GM12878 (cell line): ENCODE measurements at regions of chr4 and their contacts with region 1.

Region 1: GRCh38 chr4:105666693-105667092 is 41.8 kb downstream of the INTS12 start:
- DNase-seq: no peak
- ATAC-seq: peak; percentile 85
- H3K4me3 ChIP-seq: no peak overlapping the region
- H3K27ac ChIP-seq: no peak overlapping the region
- H3K4me1 ChIP-seq: no peaks in the 10 kb centered on the region
- H3K27me3 ChIP-seq: no peaks in the 10 kb centered on the region
- CTCF ChIP-seq: peak; percentile 28 to 44 (median 34); a peak in 4 of 6 replicates
- EP300 ChIP-seq: no peak
- POLR2A ChIP-seq: no peak
- RAD21 ChIP-seq: peak; percentile 72

Region 2: GRCh38 chr4:105496899-105497298 is 169.8 kb before region 1 on chr4:
- CTCF ChIA-PET with region 1: interaction called, 24 read pairs
- POLR2A ChIA-PET with region 1: interaction called, 5 read pairs
- RAD21 ChIA-PET with region 1: interaction called, 9 read pairs
- SMC1A ChIA-PET with region 1: interaction called, 8 read pairs
- in situ Hi-C with region 1: no loop called
- intact Hi-C with region 1: no loop called
- DNase-seq: no peak
- ATAC-seq: peak; percentile 68
- H3K4me3 ChIP-seq: no peak overlapping the region
- H3K27ac ChIP-seq: no peak overlapping the region
- H3K4me1 ChIP-seq: no peaks in the 10 kb centered on the region
- H3K27me3 ChIP-seq: no peaks in the 10 kb centered on the region
- CTCF ChIP-seq: peak; percentile 34 to 39 (median 38); a peak in 3 of 6 replicates
- EP300 ChIP-seq: no peak
- POLR2A ChIP-seq: no peak
- RAD21 ChIP-seq: peak; percentile 66

Region 3: DNA sequence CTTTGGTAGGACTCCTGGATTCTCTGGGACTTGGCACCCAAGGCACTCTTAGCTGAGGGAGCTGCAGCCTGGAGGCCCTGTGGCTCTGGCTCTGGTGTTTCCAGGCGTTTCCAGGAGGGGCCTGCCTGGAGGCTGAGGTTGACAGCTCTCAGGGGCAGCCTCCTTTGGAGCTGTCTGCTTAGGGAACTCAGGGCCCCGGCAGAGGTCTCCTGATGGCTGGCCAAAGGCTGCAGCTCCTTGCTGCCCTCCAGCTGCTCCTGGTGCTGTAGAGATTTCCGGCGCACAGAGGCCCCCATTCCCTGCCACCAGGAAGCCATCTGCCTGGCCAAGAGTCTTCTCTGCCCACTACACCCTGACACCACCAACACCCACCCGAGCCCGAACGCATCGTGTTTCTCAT is 139.6 kb before region 1 on chr4:
- CTCF ChIA-PET with region 1: interaction called, 160 read pairs
- POLR2A ChIA-PET with region 1: no interaction called
- RAD21 ChIA-PET with region 1: interaction called, 103 read pairs
- SMC1A ChIA-PET with region 1: interaction called, 146 read pairs
- in situ Hi-C with region 1: no loop called
- intact Hi-C with region 1: no loop called
- DNase-seq: no peak
- ATAC-seq: no peak
- H3K4me3 ChIP-seq: no peak overlapping the region
- H3K27ac ChIP-seq: no peak overlapping the region
- H3K4me1 ChIP-seq: no peaks in the 10 kb centered on the region
- H3K27me3 ChIP-seq: no peaks in the 10 kb centered on the region
- CTCF ChIP-seq: no peak
- EP300 ChIP-seq: no peak
- POLR2A ChIP-seq: no peak
- RAD21 ChIP-seq: no peak

Region 4: GRCh38 chr4:105624530-105624929 is 42.2 kb before region 1 on chr4:
- CTCF ChIA-PET with region 1: interaction called, 4 read pairs
- POLR2A ChIA-PET with region 1: no interaction called
- RAD21 ChIA-PET with region 1: interaction called, 4 read pairs
- SMC1A ChIA-PET with region 1: interaction called, 14 read pairs
- in situ Hi-C with region 1: no loop called
- intact Hi-C with region 1: no loop called
- DNase-seq: no peak
- ATAC-seq: peak; percentile 64
- H3K4me3 ChIP-seq: no peak overlapping the region
- H3K27ac ChIP-seq: peak overlapping the region; percentile 55
- H3K4me1 ChIP-seq: peaks cover 18% of the 10 kb centered on the region
- H3K27me3 ChIP-seq: no peaks in the 10 kb centered on the region
- CTCF ChIP-seq: no peak
- EP300 ChIP-seq: no peak
- POLR2A ChIP-seq: no peak
- RAD21 ChIP-seq: no peak

Region 5: DNA sequence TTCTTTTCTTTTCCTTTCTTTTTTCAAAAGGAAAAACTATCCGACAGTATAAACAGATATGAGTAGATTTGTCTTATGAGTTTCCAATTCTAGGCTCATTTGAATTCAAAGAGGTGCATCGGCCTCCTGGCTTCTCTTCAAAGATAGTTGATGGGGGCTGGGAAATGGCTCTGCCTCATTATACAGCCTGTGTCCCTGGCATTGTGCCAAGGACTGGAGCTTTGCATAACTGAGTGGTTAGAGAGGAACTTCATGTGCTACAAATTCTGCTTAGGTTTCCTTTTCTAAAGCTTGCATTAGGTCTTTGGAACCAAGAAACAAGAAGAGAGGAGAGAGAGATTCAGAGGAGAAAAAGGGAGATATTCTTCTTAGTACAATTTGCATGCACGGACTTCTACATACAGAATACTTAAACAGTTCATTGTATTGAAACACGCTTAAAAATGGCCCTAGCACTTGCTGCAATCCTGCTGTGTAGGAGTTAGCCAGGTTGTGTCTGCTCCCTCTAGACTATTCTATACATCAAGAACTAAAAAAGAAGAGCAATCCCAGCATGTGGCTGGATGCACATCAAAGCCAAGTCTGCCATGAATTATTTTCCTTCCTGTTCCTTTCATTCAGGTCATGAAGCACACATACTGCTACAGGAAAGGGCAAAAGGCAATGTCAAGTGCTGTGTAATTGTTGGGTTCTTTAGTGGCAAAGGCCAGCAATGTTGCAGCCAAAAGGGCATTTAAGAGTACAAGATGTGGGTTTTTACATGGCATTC is 29.1 kb before region 1 on chr4:
- CTCF ChIA-PET with region 1: interaction called, 32 read pairs
- POLR2A ChIA-PET with region 1: no interaction called
- RAD21 ChIA-PET with region 1: interaction called, 23 read pairs
- SMC1A ChIA-PET with region 1: interaction called, 130 read pairs
- in situ Hi-C with region 1: no loop called
- intact Hi-C with region 1: no loop called
- DNase-seq: peak; percentile 45
- ATAC-seq: peak; percentile 86
- H3K4me3 ChIP-seq: no peak overlapping the region
- H3K27ac ChIP-seq: no peak overlapping the region
- H3K4me1 ChIP-seq: peaks cover 12% of the 10 kb centered on the region
- H3K27me3 ChIP-seq: no peaks in the 10 kb centered on the region
- CTCF ChIP-seq: no peak
- EP300 ChIP-seq: no peak
- POLR2A ChIP-seq: no peak
- RAD21 ChIP-seq: no peak

Region 6: GRCh38 chr4:105715692-105716278 is 49.1 kb after region 1 on chr4:
- CTCF ChIA-PET with region 1: interaction called, 24 read pairs
- POLR2A ChIA-PET with region 1: no interaction called
- RAD21 ChIA-PET with region 1: interaction called, 18 read pairs
- SMC1A ChIA-PET with region 1: interaction called, 20 read pairs
- in situ Hi-C with region 1: no loop called
- intact Hi-C with region 1: no loop called
- DNase-seq: no peak
- ATAC-seq: 0 out of 3 replicates have a peak, but pooled peaks have one; percentile 10
- H3K4me3 ChIP-seq: no peak overlapping the region
- H3K27ac ChIP-seq: no peak overlapping the region
- H3K4me1 ChIP-seq: peaks cover 3% of the 10 kb centered on the region; the same call in 1 of the 2 replicates
- H3K27me3 ChIP-seq: no peaks in the 10 kb centered on the region
- CTCF ChIP-seq: peak; percentile 17 to 48 (median 36); a peak in 2 of 6 replicates
- EP300 ChIP-seq: no peak
- POLR2A ChIP-seq: no peak
- RAD21 ChIP-seq: peak; percentile 49

Region 7: GRCh38 chr4:106032851-106033286 is 366.2 kb after region 1 on chr4:
- CTCF ChIA-PET with region 1: no interaction called
- POLR2A ChIA-PET with region 1: no interaction called
- RAD21 ChIA-PET with region 1: no interaction called
- SMC1A ChIA-PET with region 1: no interaction called
- in situ Hi-C with region 1: no loop called
- intact Hi-C with region 1: no loop called
- DNase-seq: no peak
- ATAC-seq: no peak
- H3K4me3 ChIP-seq: no peak overlapping the region
- H3K27ac ChIP-seq: no peak overlapping the region
- H3K4me1 ChIP-seq: no peaks in the 10 kb centered on the region
- H3K27me3 ChIP-seq: no peaks in the 10 kb centered on the region
- CTCF ChIP-seq: no peak
- EP300 ChIP-seq: no peak
- POLR2A ChIP-seq: no peak
- RAD21 ChIP-seq: no peak